Posterior vena cava (tissue), 2 donors: ENCODE measurements at regions of chr17 and their contacts with region 1.

Region 1: DNA sequence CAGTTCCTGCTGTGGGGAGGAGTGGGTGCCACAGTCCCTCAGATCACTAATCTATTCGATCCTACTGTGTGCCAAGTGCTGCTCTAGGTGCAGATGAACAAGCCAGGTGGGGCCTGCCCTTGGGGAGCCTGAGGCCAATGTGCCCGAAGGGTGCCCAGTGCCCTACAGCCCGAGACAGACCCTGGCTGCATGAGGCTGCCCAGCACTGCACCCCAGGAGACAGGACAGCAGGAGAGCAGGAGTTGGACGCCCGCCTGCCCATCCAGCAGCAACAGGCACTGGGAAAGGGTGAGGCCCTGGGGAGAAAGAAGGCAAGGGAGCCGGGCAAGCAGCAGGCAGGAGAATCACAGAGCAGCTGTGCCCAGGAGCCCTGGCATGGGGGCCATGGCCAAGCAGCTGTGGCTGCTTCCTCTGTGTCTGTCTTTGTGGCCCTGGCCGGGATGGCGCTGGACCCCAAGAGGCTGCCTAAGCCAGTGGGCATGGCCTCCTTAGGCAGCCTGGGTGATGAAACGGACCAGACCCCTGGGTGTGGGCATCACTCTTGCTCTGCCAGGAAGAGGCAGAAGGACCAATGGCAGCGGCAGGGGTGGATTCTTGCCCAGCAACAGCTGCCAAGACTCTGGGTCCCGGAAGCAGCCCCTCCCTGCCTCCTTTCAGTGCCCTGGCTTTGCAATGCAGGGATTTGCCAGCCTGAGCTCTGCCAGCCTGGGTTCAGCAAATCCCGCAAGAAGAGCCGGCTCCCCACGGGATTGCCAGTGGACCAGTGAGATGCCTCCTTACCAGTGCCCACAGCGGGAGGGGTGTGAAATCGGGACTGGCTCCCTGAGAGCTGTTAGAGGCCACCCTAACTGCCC is 179.6 kb upstream of the TNRC6C start:
- DNase-seq: no peak

Region 2: DNA sequence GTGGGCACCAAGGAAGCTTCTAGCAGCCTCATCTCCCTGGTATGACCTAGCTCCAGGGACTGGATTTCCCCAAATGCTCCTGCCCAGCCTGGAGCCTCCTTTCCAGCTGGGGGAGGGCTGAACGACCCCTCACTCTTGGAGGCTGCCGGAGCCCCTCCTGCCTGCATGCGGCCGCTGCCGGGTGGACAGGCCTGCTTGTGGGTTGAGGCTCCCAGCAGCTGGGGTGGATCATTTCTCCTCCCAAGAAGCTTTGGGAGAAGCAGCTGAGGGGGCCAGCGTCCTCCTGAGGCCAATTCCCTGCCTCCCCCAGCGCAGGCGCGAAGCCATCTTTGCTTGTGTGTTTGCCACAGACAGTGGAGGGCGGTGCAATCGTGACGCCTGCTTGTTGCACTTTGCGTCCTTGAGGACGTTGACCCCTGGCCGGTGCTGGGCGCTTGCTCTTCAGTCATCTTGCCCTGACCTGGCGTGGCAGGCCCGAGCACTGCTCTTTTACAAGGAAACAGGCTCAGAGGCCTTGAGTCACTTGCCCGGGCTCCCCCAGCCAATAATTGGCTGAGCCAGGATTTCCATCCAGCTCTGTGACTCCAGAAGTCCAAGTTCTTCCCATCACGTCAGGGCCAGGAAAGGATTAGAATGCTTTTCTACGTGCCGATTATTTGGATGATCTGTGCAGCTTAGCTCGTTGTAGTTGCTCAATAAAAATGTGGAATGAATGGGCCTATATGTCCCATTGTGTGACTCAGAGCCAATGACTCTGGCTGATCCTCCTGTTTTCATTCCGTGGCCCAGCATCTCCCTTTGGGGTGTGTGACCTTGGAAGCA is 424.2 kb before region 1 on chr17:
- intact Hi-C with region 1: loop called in 1 of 2 experiments (anchors 5 kb)
- DNase-seq: peak; percentile 97

Region 3: DNA sequence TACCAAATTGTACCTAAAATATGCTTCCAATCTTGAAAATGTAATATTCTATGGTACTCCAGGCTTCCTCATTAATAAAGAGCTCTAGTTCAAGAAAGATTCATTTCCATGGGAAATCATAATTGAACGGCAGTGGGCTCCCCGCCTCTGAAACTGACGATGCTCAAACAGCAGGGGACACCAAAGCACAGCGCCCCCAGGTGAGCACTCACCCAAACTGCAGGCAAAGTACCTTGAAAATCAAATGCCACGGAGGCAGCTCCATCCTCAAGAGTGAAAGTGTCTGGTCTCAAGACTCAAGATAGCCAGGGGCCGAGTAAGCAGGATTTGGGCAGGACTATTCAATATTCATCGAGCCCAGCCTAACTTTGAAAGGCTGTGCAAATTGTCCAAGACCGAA is 37.8 kb before region 1 on chr17:
- intact Hi-C with region 1: loop called in 1 of 2 experiments (anchors 1 kb)
- DNase-seq: no peak

Region 4: DNA sequence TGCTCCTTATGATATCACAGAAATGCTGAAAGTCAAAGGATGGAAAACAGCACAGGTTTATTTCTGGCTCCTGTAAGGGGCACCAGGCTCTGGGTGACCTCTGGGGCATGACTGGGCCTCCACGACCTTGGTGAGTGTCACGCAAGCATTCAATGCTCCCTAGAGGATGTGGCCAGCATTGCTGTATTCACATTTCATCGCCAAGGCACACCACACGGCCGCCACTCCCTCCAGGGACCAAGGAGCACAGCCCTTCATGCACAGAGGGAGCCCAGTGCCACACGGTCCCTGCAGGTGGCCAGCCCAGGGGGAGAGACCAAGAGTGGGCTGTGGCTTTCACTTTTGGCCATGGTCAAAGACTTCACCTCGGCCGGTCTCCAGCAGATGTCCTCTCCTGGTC is 42.2 kb after region 1 on chr17:
- intact Hi-C with region 1: no loop called
- DNase-seq: peak; percentile 74